Activated CD4-positive, alpha-beta memory T cell treated with anti-CD3 and anti-CD28 coated beads for 36 hours (primary cell): ENCODE measurements at regions of chr3 and their contacts with region 1.

Region 1: DNA sequence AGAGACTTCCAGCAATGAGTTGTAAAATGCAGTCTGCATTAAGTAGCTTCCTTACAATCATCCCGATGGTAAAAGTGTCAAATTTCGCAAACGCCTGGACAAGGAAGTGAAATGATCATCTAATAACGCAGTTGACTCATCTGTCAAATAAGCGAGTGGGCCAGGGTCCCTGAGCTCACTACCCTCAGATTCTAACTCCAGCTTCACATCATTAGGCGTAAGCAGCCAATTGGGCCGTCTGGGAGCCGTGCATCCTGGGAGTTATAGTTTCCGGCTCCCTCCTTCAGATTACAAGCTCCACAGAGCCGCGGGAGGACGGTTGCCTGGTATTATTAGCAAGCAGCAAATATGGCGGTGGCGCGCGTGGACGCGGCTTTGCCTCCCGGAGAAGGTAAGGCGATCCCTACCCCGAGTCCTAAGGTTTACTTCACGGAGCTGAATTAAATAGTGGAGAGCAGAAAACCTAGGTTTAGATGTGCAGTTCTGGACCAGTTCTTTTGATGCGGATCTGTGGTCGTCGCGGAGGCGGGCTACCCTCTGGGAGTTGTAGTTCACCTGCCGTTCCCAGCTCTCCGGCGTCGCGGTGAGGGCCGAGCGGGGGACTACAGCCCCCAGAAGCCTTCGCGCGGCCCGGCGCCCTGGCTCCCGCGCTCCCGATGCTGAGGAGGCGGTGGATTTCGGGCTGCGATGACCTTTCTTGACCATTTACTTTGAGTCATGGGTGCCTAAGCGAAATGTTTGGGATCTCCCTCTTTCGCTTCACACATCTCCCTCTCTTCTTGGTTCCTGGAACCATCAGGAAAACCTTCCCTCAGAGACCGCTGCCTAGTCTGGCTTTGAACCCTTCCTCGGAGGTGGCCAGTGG is at the start of gene CEP97:
- DNase-seq: peak; percentile 92
- H3K4me3 Mint-ChIP-seq: peak within 1 kb of the TSS; percentile 99
- H3K27ac Mint-ChIP-seq: peak within 1 kb of the TSS; percentile 99
- H3K4me1 Mint-ChIP-seq: peaks cover 46% of the 10 kb centered on the region
- H3K27me3 Mint-ChIP-seq: no peaks in the 10 kb centered on the region
- total RNA-seq, gene CEP97: 16.6 to 17.9 TPM

Region 2: DNA sequence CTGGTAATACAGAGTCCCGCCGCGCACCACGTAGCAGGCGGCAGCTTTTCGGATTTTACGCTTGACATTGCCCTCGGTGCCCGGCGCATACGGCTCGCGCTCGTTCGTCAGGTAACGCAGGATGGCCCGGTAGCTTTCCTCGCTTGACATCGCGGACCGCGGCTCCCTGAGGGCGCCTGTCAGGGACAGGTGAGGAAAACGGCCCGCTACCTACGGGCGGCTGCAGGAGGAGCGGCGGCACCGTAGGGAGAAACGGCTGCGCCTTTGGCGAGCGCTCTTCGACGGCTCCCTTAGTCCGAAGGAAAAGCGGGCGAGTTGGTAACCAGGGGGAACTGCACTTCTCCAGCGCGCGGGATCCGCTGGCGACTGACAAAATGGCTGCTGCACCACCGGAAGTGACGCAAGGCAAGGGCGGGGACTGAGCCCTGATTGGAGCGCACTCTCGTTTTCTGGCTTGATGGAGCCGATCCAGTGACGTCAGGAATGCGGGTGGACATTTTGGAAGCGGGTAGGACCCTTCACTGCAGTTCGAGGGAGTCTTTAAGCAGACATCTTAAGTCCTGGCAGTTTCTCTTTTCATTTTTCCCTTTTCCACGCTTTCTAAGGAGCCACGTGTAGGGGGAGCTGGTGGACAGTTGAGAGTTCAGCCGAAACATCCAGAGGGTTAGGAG is 47.7 kb before region 1 on chr3 and contains the start of gene ZBTB11:
- CTCF ChIA-PET with region 1: interaction called, 7 read pairs
- POLR2A ChIA-PET with region 1: interaction called, 6 read pairs
- intact Hi-C with region 1: loop called (anchors 1 kb)
- DNase-seq: peak; percentile 100
- H3K4me3 Mint-ChIP-seq: peak within 1 kb of the TSS; percentile 93
- H3K27ac Mint-ChIP-seq: peak within 1 kb of the TSS; percentile 91
- H3K4me1 Mint-ChIP-seq: peaks cover 57% of the 10 kb centered on the region
- H3K27me3 Mint-ChIP-seq: no peaks in the 10 kb centered on the region
- total RNA-seq, gene ZBTB11: 28.0 to 30.3 TPM

Region 3: DNA sequence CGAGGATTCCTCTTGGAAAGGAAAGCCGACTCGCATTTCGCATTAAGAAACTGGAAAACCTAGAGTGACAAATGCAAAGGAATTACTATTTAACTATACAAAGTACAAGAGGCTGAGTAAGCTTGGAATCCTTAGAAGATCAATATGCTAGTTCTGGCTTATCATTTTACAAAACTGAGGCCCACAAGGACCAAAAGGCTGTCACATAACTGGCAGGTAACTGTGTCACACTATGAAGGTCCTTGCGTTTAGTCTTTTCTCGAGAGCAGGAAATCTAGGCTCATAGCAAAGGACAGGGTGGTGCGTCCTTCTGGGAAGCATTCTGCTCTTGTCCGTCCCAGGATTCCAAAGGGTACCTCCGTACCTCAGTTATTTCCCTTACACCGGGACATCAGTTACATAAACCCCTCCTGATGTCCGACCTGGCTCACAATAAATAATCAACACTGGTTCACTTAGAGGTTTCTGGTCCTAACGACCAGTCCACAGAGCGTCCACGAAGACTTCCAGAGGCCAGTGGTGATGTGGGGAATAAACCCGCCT is 38.6 kb before region 1 on chr3:
- CTCF ChIA-PET with region 1: interaction called, 3 read pairs
- POLR2A ChIA-PET with region 1: interaction called, 7 read pairs
- intact Hi-C with region 1: loop called (anchors 1 kb)
- DNase-seq: no peak
- H3K4me3 Mint-ChIP-seq: peak overlapping the region; percentile 99
- H3K27ac Mint-ChIP-seq: peak overlapping the region; percentile 99
- H3K4me1 Mint-ChIP-seq: peaks cover 40% of the 10 kb centered on the region
- H3K27me3 Mint-ChIP-seq: no peaks in the 10 kb centered on the region

Region 4: DNA sequence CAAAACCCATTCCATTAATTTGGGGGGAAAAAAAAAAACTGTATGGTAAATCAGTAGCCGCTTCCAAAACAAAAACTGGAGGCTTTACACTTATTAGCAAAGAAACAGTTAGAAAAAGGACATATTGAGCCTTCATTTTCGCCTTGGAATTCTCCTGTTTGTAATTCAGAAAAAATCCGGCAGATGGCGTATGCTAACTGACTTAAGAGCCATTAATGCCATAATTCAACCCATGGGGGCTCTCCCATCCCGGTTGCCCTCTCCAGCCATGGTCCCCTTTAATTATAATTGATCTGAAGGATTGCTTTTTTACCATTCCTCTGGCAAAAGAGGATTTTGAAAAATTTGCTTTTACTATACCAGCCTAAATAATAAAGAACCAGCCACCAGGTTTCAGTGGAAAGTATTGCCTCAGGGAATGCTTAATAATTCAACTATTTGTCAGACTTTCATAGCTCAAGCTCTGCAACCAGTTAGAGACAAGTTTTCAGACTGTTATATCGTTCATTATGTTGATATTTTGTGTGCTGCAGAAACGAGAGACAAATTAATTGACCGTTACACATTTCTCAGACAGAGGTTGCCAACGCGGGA is 28.7 kb before region 1 on chr3:
- CTCF ChIA-PET with region 1: interaction called, 3 read pairs
- POLR2A ChIA-PET with region 1: no interaction called
- intact Hi-C with region 1: loop called (anchors 1 kb)
- DNase-seq: no peak
- H3K4me3 Mint-ChIP-seq: no peak overlapping the region
- H3K27ac Mint-ChIP-seq: no peak overlapping the region
- H3K4me1 Mint-ChIP-seq: peaks cover 8% of the 10 kb centered on the region
- H3K27me3 Mint-ChIP-seq: no peaks in the 10 kb centered on the region

Region 5: DNA sequence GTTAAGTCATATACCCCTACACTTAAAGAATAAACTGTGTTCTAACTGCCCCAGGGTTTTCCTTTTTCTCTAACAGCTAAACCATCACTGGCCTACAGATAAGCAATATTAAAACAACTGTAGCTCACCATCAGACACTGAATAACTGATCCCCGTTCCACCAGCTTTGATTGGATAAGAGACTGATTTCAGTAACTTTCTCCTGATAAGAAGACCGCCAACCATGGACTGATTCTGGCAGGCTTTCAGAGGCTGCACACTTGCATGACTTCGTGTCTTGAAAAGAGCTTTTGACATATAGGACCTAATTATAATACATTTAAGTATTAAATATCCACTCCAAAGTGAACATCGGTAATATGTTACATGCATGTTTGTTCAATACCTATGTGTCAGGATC is 15.4 kb before region 1 on chr3:
- CTCF ChIA-PET with region 1: interaction called, 11 read pairs
- POLR2A ChIA-PET with region 1: interaction called, 3 read pairs
- intact Hi-C with region 1: no loop called
- DNase-seq: no peak
- H3K4me3 Mint-ChIP-seq: no peak overlapping the region
- H3K27ac Mint-ChIP-seq: no peak overlapping the region
- H3K4me1 Mint-ChIP-seq: no peaks in the 10 kb centered on the region
- H3K27me3 Mint-ChIP-seq: no peaks in the 10 kb centered on the region

Region 6: GRCh38 chr3:101779047-101779821 is 54.7 kb after region 1 on chr3 and contains the start of gene NXPE3:
- CTCF ChIA-PET with region 1: no interaction called
- POLR2A ChIA-PET with region 1: interaction called, 9 read pairs
- intact Hi-C with region 1: loop called (anchors 1 kb)
- DNase-seq: peak; percentile 96
- H3K4me3 Mint-ChIP-seq: peak within 1 kb of the TSS; percentile 95
- H3K27ac Mint-ChIP-seq: peak within 1 kb of the TSS; percentile 95
- H3K4me1 Mint-ChIP-seq: peaks cover 51% of the 10 kb centered on the region
- H3K27me3 Mint-ChIP-seq: no peaks in the 10 kb centered on the region
- total RNA-seq, gene NXPE3: 18.7 to 19.8 TPM